K562 (cell line): ENCODE measurements at regions of chr19 and their contacts with region 1.

Region 1: GRCh38 chr19:49118565-49119410 is at the start of gene C19orf73:
- DNase-seq: peak; percentile 96 to 99 (median 97)
- ATAC-seq: peak; percentile 89
- H3K4me3 ChIP-seq: peak within 1 kb of the TSS; percentile 53
- H3K27ac ChIP-seq: peak within 1 kb of the TSS; percentile 98
- H3K4me1 ChIP-seq: peaks cover 32 to 65% of the 10 kb centered on the region in 2 experiments
- H3K27me3 ChIP-seq: no peaks in the 10 kb centered on the region
- CTCF ChIP-seq: peak in 2 of 3 experiments; percentile 18 to 24; a peak in 2 of 6 replicates
- EP300 ChIP-seq: no peak
- POLR2A ChIP-seq: peak; percentile 79
- RAD21 ChIP-seq: no peak
- polyA plus RNA-seq, gene C19orf73: 0.08 to 0.32 TPM

Region 2: GRCh38 chr19:49106648-49107135 is 12.1 kb before region 1 on chr19:
- CTCF ChIA-PET with region 1: no interaction called
- POLR2A ChIA-PET with region 1: interaction called, 20 read pairs
- in situ Hi-C with region 1: no loop called
- intact Hi-C with region 1: no loop called
- DNase-seq: peak in 2 of 4 experiments; percentile 34 to 71
- ATAC-seq: peak; percentile 64
- H3K4me3 ChIP-seq: no peak overlapping the region
- H3K27ac ChIP-seq: no peak overlapping the region
- H3K4me1 ChIP-seq: peaks cover 12 to 57% of the 10 kb centered on the region in 2 experiments
- H3K27me3 ChIP-seq: no peaks in the 10 kb centered on the region
- CTCF ChIP-seq: peak; percentile 71 to 95 (median 73)
- EP300 ChIP-seq: peak; percentile 11; the same call in 1 of the 2 replicates
- POLR2A ChIP-seq: no peak
- RAD21 ChIP-seq: peak in 1 of 2 experiments; percentile 46; a peak in 2 of 4 replicates

Region 3: DNA sequence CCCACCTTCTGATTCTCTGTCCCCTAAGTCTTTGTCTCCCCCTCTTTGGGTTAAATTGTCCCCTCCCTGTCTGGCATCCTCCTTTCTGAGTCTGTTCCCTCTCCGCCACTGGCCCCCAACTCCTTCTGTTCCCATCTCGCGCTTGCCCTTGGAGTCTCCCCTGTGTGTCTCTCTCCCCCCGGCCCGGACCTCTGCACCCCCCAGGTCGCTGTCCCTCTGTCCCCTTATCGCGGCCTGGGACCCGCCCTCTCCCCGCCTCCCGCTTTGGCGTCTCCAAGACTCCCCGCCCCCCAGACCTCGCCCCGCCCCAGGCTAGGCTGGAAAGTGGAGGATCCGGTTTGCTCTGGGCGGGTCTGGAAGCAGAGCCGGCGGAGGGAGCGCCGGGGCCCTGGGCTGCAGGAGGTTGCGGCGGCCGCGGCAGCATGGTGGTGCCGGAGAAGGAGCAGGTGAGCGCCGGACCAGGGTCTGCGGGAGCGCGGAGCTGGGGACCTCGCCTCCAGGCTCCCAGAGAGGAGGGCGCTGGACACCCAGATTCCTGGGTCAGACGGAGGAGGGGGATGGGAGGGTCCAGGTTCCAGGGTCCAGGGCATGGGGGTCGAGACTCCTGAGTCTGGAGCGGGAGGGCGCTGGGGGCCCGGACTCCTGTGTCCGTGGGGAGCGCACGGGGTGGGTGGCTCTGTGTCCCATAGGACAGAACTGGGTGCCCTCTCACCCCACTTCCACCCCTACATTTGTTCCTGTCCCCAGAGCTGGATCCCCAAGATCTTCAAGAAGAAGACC is 38.8 kb after region 1 on chr19 and contains the start of gene TRPM4:
- CTCF ChIA-PET with region 1: no interaction called
- POLR2A ChIA-PET with region 1: interaction called, 3 read pairs
- in situ Hi-C with region 1: no loop called
- intact Hi-C with region 1: loop called (anchors 5 kb)
- DNase-seq: peak; percentile 88 to 96 (median 93)
- ATAC-seq: peak; percentile 88
- H3K4me3 ChIP-seq: peak within 1 kb of the TSS; percentile 83
- H3K27ac ChIP-seq: peak within 1 kb of the TSS; percentile 95
- H3K4me1 ChIP-seq: peaks cover 55 to 74% of the 10 kb centered on the region in 2 experiments
- H3K27me3 ChIP-seq: no peaks in the 10 kb centered on the region
- CTCF ChIP-seq: no peak
- EP300 ChIP-seq: no peak
- POLR2A ChIP-seq: peak; percentile 96
- RAD21 ChIP-seq: no peak
- polyA plus RNA-seq, gene TRPM4: 6.5 to 7.9 TPM

Region 4: GRCh38 chr19:50329146-50329925 is 1210.5 kb after region 1 on chr19 and contains the start of gene KCNC3:
- CTCF ChIA-PET with region 1: no interaction called
- POLR2A ChIA-PET with region 1: no interaction called
- in situ Hi-C with region 1: loop called (anchors 10 kb)
- intact Hi-C with region 1: no loop called
- DNase-seq: peak; percentile 93 to 100 (median 97)
- ATAC-seq: peak; percentile 79
- H3K4me3 ChIP-seq: peak within 1 kb of the TSS; percentile 44
- H3K27ac ChIP-seq: peak within 1 kb of the TSS; percentile 76
- H3K4me1 ChIP-seq: peaks cover 44 to 85% of the 10 kb centered on the region in 2 experiments
- H3K27me3 ChIP-seq: no peaks in the 10 kb centered on the region
- CTCF ChIP-seq: no peak
- EP300 ChIP-seq: no peak
- POLR2A ChIP-seq: peak; percentile 89
- RAD21 ChIP-seq: no peak
- polyA plus RNA-seq, gene KCNC3: 0.03 to 0.06 TPM